ENCODE measurements at regions of chrX and their contacts with region 1.

Region 1: GRCh38 chrX:130196466-130196865 is 24.7 kb downstream of the RAB33A start:
- DNase-seq: no peak
- H3K4me3 ChIP-seq: no peak overlapping the region
- H3K27ac ChIP-seq: no peak overlapping the region
- H3K4me1 ChIP-seq: no peaks in the 10 kb centered on the region
- H3K27me3 ChIP-seq: no peaks in the 10 kb centered on the region
- CTCF ChIP-seq: no peak

Region 2: DNA sequence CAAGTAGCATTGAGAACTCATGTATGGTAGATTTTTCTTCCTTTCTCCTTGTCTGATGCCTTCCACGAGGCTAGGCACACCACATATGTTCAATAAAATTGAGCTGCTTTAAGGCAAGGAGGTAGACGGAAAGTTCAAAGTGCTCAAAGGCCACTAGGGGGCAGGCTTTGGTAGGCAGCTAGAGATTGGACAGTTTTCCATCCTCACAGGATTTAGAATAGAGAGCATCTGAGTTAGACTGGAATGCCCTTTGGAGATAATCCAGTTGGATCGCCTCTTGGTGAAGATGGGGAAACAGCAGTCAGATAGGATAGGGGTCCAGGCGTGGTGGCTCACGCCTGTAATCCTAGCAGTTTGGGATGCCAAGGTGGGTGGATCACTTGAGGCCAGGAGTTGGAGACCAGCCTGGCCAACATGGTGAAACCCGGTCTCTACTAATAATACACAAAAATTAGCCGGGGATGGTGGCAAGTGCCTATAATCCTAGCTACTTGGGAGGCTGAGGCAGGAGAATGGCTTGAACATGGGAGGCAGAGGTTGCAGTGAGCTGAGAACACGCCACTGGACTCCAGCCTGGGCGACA is 116.6 kb before region 1 on chrX:
- CTCF ChIA-PET with region 1: interaction called, 5 read pairs
- POLR2A ChIA-PET with region 1: no interaction called
- intact Hi-C with region 1: loop called (anchors 1 kb)
- DNase-seq: peak; percentile 78
- H3K4me3 ChIP-seq: no peak overlapping the region
- H3K27ac ChIP-seq: no peak overlapping the region
- H3K4me1 ChIP-seq: no peaks in the 10 kb centered on the region
- H3K27me3 ChIP-seq: no peaks in the 10 kb centered on the region
- CTCF ChIP-seq: peak; percentile 79

Region 3: GRCh38 chrX:130933358-130933757 is 736.9 kb after region 1 on chrX:
- CTCF ChIA-PET with region 1: no interaction called
- POLR2A ChIA-PET with region 1: no interaction called
- intact Hi-C with region 1: no loop called
- DNase-seq: no peak
- H3K4me3 ChIP-seq: no peak overlapping the region
- H3K27ac ChIP-seq: no peak overlapping the region
- H3K4me1 ChIP-seq: no peaks in the 10 kb centered on the region
- H3K27me3 ChIP-seq: peaks cover 3% of the 10 kb centered on the region
- CTCF ChIP-seq: no peak

Measured in A673 (cell line).